Dorsolateral prefrontal cortex (tissue), 120 donors: ENCODE measurements at regions of chr4 and their contacts with region 1.

Region 1: GRCh38 chr4:140373328-140374129 is at the start of gene SCOC:
- DNase-seq: peak; percentile 98 to 100 (median 99)
- H3K4me3 ChIP-seq: peak within 1 kb of the TSS; percentile 66 to 99 (median 94)
- H3K27ac ChIP-seq: peak within 1 kb of the TSS; percentile 18 to 93 (median 86)
- H3K27me3 ChIP-seq: no peaks in the 10 kb centered on the region
- CTCF ChIP-seq: peak in 24 of 56 donors; percentile 2 to 58 (median 26)
- total RNA-seq, gene SCOC: 41.1 to 150 (median 105) TPM

Region 2: GRCh38 chr4:140427106-140427961 is 53.8 kb after region 1 on chr4 and contains the start of gene CLGN:
- intact Hi-C with region 1: loop called in 1 of 2 experiments (anchors 1 kb)
- DNase-seq: peak; percentile 38 to 86 (median 62)
- H3K4me3 ChIP-seq: peak within 1 kb of the TSS; percentile 41 to 89 (median 74)
- H3K27ac ChIP-seq: peak within 1 kb of the TSS in 15 of 59 donors; percentile 5 to 76 (median 36)
- H3K27me3 ChIP-seq: peaks cover 0 to 3% (median 0%) of the 10 kb centered on the region in 45 donors
- CTCF ChIP-seq: peak in 52 of 56 donors; percentile 10 to 65 (median 42)
- total RNA-seq, gene CLGN: 1.5 to 7.8 (median 4.2) TPM

Region 3: DNA sequence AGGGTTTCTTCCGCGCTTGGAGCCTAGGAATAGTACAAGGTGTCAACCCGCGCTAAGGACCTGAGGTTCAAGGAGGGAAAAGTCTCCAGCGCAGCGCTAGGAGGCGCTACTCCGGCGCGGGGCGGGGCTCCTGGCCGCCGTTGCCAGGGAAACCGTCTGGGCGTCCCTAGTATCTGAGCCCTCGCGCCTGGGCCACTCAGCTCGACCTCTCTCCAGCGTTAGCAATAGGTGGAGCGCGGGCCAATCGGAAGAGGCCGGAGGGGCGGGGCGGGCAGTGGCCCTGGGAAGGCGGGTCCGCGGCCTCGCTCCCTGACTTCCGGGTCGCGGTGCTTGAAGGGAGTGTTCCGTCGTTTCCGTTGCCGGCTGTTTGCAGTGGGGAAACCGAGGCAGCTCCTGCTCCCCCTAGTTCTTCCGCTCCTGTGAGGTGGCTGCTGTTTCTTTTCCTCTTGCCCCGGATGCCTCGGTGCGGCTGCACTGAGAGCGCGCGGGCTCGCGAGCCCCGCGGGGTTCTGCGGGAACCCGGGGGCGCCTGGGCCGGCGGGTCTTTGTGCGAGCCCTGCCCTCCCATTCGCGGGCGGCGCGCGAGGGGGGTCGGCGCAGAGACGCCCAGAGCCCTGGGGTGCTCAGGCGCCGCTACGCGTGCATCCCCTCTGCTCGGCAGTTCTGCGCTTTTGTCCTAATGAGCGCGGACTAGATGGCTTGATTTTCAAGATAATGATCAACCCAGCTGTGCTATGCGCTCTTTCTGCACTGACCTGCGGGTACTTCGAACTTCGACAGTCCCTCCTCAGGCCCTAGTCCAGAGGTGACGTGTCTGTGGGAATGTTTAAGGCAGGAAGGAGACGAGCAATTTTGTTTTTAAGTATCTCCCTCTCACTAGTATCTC is 150.6 kb after region 1 on chr4 and contains the start of gene ELMOD2:
- intact Hi-C with region 1: loop called (anchors 5 kb)
- DNase-seq: peak; percentile 98 to 100 (median 99)
- H3K4me3 ChIP-seq: peak within 1 kb of the TSS; percentile 66 to 99 (median 91)
- H3K27ac ChIP-seq: peak within 1 kb of the TSS in 53 of 59 donors; percentile 8 to 93 (median 71)
- H3K27me3 ChIP-seq: no peaks in the 10 kb centered on the region
- CTCF ChIP-seq: peak; percentile 70 to 99 (median 93)
- total RNA-seq, gene ELMOD2: 12.8 to 30.1 (median 20.9) TPM